ENCODE measurements at regions of chr22 and their contacts with region 1.

Region 1: GRCh38 chr22:37658133-37659065 is at the start of gene PDXP:
- DNase-seq: peak; percentile 98
- H3K4me3 ChIP-seq: peak within 1 kb of the TSS; percentile 27 to 57
- H3K4me3 Mint-ChIP-seq: peak within 1 kb of the TSS; percentile 82 to 94 (median 86)
- H3K27ac ChIP-seq: peak within 1 kb of the TSS; percentile 63
- H3K27ac Mint-ChIP-seq: peak within 1 kb of the TSS; percentile 85 to 98 (median 93)
- H3K4me1 ChIP-seq: peaks cover 33% of the 10 kb centered on the region
- H3K4me1 Mint-ChIP-seq: peaks cover 29 to 49% (median 37%) of the 10 kb centered on the region in 4 donors
- H3K27me3 ChIP-seq: no peaks in the 10 kb centered on the region
- H3K27me3 Mint-ChIP-seq: no peaks in the 10 kb centered on the region
- total RNA-seq, gene PDXP: 7.3 to 9.8 TPM

Region 2: DNA sequence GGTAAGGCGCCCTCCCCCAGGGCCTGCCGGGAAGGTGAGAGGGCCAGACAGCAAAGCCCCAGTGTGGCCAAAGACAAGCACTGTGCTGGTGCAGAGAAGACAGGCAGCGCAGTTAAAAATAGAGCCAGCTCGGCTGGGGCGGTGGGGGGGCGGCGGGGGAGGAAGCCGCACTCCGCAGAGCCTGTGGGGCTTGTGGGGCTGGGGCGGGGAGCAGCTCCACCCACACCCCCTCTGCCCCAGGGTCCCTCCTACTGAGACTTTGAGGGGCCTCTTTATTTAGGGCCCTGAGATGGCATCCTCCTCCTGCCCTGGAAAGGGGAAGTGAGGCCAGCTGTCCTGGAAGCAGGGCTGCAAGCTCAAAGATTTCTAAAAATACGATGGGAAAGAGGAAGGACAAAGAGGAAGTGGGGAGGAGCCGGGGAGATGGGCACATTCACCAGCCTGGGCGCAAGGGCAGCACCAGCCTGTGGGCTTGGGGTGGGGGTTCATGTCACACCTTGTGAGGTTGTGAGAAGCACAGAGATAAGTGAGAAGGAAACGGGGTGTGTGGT is 373.5 kb before region 1 on chr22:
- CTCF ChIA-PET with region 1: no interaction called
- POLR2A ChIA-PET with region 1: no interaction called
- intact Hi-C with region 1: no loop called
- DNase-seq: peak; percentile 31 to 65 (median 33)
- H3K4me3 ChIP-seq: peak overlapping the region; percentile 98 to 99
- H3K4me3 Mint-ChIP-seq: peak overlapping the region; percentile 89 to 100 (median 94)
- H3K27ac ChIP-seq: peak overlapping the region; percentile 81
- H3K27ac Mint-ChIP-seq: peak overlapping the region; percentile 83 to 96 (median 93)
- H3K4me1 ChIP-seq: peaks cover 65% of the 10 kb centered on the region
- H3K4me1 Mint-ChIP-seq: peaks cover 44 to 78% (median 63%) of the 10 kb centered on the region in 4 donors
- H3K27me3 ChIP-seq: no peaks in the 10 kb centered on the region
- H3K27me3 Mint-ChIP-seq: no peaks in the 10 kb centered on the region

Region 3: GRCh38 chr22:37676736-37677492 is 18.5 kb after region 1 on chr22:
- CTCF ChIA-PET with region 1: interaction called, 181 read pairs
- POLR2A ChIA-PET with region 1: interaction called, 348 read pairs
- intact Hi-C with region 1: loop called (anchors 1 kb)
- DNase-seq: peak; percentile 92 to 97 (median 93)
- H3K4me3 ChIP-seq: peak overlapping the region; percentile 62 to 95
- H3K4me3 Mint-ChIP-seq: peak overlapping the region; percentile 88 to 99 (median 94)
- H3K27ac ChIP-seq: peak overlapping the region; percentile 87
- H3K27ac Mint-ChIP-seq: peak overlapping the region; percentile 96 to 100 (median 100)
- H3K4me1 ChIP-seq: peaks cover 48% of the 10 kb centered on the region
- H3K4me1 Mint-ChIP-seq: peaks cover 29 to 80% (median 46%) of the 10 kb centered on the region in 4 donors
- H3K27me3 ChIP-seq: no peaks in the 10 kb centered on the region
- H3K27me3 Mint-ChIP-seq: no peaks in the 10 kb centered on the region

Region 4: DNA sequence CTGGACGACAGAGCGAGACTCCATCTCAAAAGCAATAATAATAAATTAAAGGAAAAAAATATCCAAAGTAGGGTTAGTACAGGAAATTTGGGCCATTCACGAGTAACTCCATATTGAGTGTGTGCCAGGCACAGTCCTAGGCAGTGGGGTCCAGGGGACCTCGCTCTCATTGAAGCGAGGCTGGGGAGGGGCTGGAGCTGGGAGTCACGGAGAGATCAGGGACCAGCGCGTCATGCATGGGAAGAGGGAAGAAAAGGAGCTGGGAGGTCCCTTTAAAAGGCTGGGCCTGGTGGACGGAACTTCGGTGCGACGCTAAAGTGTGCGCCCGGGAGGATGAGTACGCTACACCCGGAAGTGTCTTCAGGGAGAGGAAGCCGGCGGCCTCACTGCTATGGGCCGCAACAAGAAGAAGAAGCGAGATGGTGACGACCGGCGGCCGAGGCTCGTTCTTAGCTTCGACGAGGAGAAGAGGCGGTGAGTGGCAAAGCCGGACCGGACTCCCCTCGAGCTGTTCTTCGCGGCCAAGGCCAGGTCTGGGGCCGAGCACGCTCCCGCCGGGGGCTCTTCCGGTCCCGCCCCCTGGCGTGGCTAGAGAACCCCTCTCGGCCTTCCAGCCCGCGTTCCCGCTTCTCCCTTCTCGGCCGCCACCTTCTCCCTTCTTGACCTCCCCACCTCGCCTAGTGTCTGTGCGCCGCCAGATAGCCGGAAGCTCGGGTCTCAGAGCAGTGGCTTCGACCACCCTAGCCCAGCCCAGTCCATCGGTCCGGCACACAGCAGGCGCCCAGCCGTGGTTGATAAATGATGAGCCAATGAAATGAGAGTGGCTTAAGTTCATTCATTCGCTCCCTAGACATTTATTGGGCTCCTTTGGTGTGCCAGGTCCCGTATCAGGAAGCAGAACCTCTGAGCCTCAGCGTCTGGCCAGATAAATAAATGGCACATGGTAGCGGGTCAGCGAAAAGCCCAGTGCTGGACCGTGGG is 27.9 kb after region 1 on chr22 and contains the start of gene NOL12:
- CTCF ChIA-PET with region 1: interaction called, 181 read pairs
- POLR2A ChIA-PET with region 1: interaction called, 70 read pairs
- intact Hi-C with region 1: loop called (anchors 1 kb)
- DNase-seq: peak; percentile 76 to 82 (median 77)
- H3K4me3 ChIP-seq: peak within 1 kb of the TSS; percentile 79 to 96
- H3K4me3 Mint-ChIP-seq: peak within 1 kb of the TSS; percentile 91 to 98 (median 96)
- H3K27ac ChIP-seq: peak within 1 kb of the TSS; percentile 92
- H3K27ac Mint-ChIP-seq: peak within 1 kb of the TSS; percentile 91 to 98 (median 95)
- H3K4me1 ChIP-seq: peaks cover 25% of the 10 kb centered on the region
- H3K4me1 Mint-ChIP-seq: peaks cover 16 to 34% (median 25%) of the 10 kb centered on the region in 4 donors
- H3K27me3 ChIP-seq: no peaks in the 10 kb centered on the region
- H3K27me3 Mint-ChIP-seq: no peaks in the 10 kb centered on the region
- total RNA-seq, gene NOL12: 50.3 to 52.0 TPM

Region 5: DNA sequence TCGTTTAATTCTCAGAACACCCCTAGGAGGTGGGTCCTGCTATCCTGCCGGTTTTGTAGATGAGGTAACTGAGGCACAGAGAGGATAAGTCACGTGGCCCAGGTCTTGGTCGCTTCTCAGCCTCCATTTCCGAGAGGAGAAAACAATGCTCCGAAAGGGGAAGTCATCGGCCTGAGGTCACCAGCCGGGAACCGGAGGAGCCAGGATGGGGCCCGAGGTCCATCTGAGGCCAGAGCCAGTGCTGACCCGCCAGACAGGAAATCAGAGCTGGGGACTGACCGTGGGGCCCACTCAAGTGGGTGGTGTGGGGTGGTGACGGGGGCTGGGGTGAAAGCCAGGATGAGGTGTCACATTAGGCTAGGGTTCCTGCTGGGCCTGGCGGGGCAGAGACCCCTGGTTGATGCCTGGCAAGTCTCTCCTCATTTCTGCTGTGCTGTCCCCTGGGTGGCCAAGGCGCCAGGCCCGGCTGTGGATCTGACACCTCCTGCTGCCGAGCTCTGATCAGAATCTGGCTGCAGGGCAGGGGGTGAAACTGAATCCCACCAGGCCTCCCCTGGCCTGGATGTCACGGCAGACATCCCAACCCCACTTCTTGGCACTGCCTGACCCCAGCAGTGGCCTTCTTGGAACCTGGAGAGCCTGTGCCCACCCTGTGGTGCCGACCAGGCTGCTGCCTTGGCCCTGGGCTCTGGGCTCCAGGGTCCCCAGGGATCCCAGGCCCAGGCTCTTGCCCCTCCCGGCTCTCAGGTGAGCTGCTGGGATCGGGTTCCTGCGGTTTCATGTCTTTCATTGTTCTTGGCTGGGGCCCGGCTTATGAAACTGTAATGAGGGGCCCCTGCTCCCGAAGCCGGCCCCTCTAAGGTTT is 50.4 kb after region 1 on chr22:
- CTCF ChIA-PET with region 1: no interaction called
- POLR2A ChIA-PET with region 1: no interaction called
- intact Hi-C with region 1: no loop called
- DNase-seq: no peak
- H3K4me3 ChIP-seq: no peak overlapping the region
- H3K4me3 Mint-ChIP-seq: no peak overlapping the region
- H3K27ac ChIP-seq: no peak overlapping the region
- H3K27ac Mint-ChIP-seq: no peak overlapping the region
- H3K4me1 ChIP-seq: no peaks in the 10 kb centered on the region
- H3K4me1 Mint-ChIP-seq: no peaks in the 10 kb centered on the region
- H3K27me3 ChIP-seq: no peaks in the 10 kb centered on the region
- H3K27me3 Mint-ChIP-seq: no peaks in the 10 kb centered on the region